MCF 10A (cell line): ENCODE measurements at regions of chr10 and their contacts with region 1.

Region 1: GRCh38 chr10:89954787-89955566 is 253.6 kb downstream of the KIF20B start:
- DNase-seq: peak; percentile 13
- H3K4me3 Mint-ChIP-seq: no peak overlapping the region
- H3K27ac Mint-ChIP-seq: no peak overlapping the region
- H3K4me1 Mint-ChIP-seq: no peaks in the 10 kb centered on the region
- H3K27me3 Mint-ChIP-seq: no peaks in the 10 kb centered on the region
- CTCF ChIP-seq: peak; percentile 44

Region 2: GRCh38 chr10:89633484-89633883 is 321.5 kb before region 1 on chr10:
- CTCF ChIA-PET with region 1: no interaction called
- POLR2A ChIA-PET with region 1: no interaction called
- intact Hi-C with region 1: no loop called
- DNase-seq: peak; percentile 79
- H3K4me3 Mint-ChIP-seq: no peak overlapping the region
- H3K27ac Mint-ChIP-seq: peak overlapping the region; percentile 54
- H3K4me1 Mint-ChIP-seq: peaks cover 20% of the 10 kb centered on the region
- H3K27me3 Mint-ChIP-seq: no peaks in the 10 kb centered on the region
- CTCF ChIP-seq: no peak

Region 3: GRCh38 chr10:89853781-89854191 is 101.2 kb before region 1 on chr10:
- CTCF ChIA-PET with region 1: no interaction called
- POLR2A ChIA-PET with region 1: no interaction called
- intact Hi-C with region 1: no loop called
- DNase-seq: no peak
- H3K4me3 Mint-ChIP-seq: no peak overlapping the region
- H3K27ac Mint-ChIP-seq: no peak overlapping the region
- H3K4me1 Mint-ChIP-seq: no peaks in the 10 kb centered on the region
- H3K27me3 Mint-ChIP-seq: no peaks in the 10 kb centered on the region
- CTCF ChIP-seq: no peak

Region 4: GRCh38 chr10:90138844-90139243 is 183.9 kb after region 1 on chr10:
- CTCF ChIA-PET with region 1: no interaction called
- POLR2A ChIA-PET with region 1: interaction called, 3 read pairs
- intact Hi-C with region 1: loop called (anchors 5 kb)
- DNase-seq: peak; percentile 39
- H3K4me3 Mint-ChIP-seq: no peak overlapping the region
- H3K27ac Mint-ChIP-seq: no peak overlapping the region
- H3K4me1 Mint-ChIP-seq: peaks cover 4% of the 10 kb centered on the region
- H3K27me3 Mint-ChIP-seq: no peaks in the 10 kb centered on the region
- CTCF ChIP-seq: peak; percentile 42

Region 5: DNA sequence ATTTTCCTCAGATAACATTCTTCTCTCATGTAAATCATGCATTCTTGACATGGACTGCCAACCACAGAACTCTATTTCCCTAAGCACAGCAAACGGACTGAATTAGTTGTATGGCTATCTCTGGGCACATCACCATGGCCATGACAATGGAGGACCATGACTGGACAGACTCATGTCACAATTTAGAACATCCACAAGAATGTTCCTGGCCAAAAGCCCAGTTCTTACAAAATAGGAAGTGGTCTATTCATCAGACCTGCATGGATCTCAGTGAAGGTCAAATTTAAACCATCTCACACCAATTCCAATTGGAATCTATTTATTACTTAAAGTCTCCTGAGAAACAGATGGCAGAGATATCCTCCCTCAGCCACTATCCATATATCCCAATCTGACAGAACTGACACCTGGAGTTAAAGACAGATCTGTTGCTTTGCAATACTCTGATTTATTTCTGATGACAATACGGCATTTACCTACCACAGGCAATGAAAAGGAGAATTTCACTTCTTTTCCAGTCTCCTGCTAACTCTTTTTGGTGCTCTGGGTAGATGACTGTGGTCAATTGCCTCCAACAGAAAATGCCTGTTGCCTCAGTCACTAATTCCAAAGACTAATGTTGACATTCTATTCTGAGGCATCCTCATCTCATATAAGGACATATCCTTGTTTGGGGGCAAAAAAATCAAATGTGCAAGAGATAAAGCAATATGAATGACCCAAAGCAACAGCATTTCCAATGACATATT is 648.1 kb after region 1 on chr10:
- CTCF ChIA-PET with region 1: no interaction called
- POLR2A ChIA-PET with region 1: no interaction called
- intact Hi-C with region 1: no loop called
- DNase-seq: peak; percentile 81
- H3K4me3 Mint-ChIP-seq: no peak overlapping the region
- H3K27ac Mint-ChIP-seq: no peak overlapping the region
- H3K4me1 Mint-ChIP-seq: peaks cover 13% of the 10 kb centered on the region
- H3K27me3 Mint-ChIP-seq: no peaks in the 10 kb centered on the region
- CTCF ChIP-seq: no peak